ENCODE measurements at regions of chr16 and their contacts with region 1.

Region 1: GRCh38 chr16:85821441-85822135 is 22.1 kb downstream of the COX4I1 start:
- DNase-seq: peak; percentile 50 to 96 (median 76)

Region 2: GRCh38 chr16:85717393-85718121 is 104.0 kb before region 1 on chr16:
- intact Hi-C with region 1: no loop called
- DNase-seq: peak in 8 of 10 donors; percentile 49 to 91 (median 69)

Region 3: DNA sequence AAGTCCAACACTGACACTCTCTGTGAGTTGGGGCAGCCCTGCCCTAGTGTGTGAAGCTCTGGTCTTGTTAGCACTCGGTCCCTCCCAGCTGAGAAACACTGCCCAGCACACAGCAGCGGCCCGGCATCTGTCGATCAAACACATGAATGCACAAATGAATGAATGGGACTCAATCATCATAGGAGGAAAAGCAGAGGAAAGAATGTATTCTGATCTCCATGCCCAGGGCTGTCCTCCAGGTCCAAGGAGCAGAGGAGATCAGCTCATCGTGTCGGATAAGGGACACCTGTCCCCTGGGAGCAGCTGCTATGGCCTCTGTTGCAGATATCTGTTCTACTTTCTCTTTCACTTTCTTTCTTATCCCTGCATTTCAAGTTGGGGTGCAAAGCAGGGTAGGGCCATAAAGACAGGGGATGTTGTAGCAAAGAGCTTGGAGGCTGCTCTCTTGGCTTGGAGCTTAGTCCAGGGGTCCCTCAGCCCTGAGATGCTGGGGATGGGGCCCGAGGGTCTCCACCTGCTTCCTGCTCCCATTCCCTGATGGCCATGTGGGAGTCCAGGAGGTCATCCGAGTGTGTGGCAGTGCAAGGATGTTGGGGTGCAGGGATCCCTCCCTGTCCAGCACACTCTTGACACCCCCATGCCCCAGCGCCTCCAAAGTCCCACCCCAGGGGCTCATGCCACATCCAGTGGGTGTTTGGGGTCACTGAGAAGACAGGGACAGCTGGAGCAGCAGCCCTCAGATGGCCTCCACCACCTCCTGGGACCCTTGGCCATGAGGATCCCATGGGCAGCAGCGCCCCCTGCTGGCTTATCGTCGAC is 165.6 kb after region 1 on chr16:
- intact Hi-C with region 1: loop called (anchors 1 kb)
- DNase-seq: peak in 2 of 10 donors; percentile 62 to 75

Region 4: GRCh38 chr16:86016201-86016871 is 194.7 kb after region 1 on chr16:
- intact Hi-C with region 1: loop called (anchors 1 kb)
- DNase-seq: peak in 7 of 10 donors; percentile 28 to 87 (median 46)

Region 5: GRCh38 chr16:86080131-86080875 is 258.7 kb after region 1 on chr16:
- intact Hi-C with region 1: no loop called
- DNase-seq: peak in 4 of 10 donors; percentile 2 to 69 (median 27)

Region 6: DNA sequence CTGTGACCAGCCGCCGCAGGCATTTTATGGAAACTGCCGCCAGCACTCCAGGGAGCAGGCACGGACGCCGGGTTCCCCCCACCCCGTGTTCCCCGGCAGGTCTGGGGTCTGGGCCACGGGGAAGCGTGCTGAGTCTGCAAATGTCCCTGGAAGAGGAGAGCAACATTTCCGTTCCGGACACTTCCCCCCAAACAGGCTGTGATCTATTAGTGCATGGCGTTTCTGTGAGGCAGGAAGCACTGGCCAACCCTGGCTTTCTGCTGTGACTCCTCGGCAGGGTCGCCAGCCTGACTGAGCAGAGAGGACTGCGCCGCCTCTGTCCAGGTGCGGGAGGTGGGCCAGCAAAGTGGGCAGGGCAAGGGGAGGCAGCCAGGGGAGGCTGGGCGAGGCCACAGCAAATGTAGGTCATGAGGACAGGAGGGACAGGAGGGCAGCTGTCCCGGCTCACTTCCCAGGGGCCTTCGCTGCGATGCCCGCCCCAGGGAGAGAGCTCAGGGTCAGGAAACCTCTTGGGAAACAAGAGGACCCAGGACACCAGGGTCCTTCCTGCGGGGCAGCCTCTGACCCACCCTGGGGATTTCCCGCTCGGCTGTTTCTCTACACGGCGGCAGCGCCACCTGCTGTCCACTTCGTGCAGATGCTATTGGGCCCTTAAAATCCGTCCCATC is 698.2 kb after region 1 on chr16:
- intact Hi-C with region 1: loop called (anchors 5 kb)
- DNase-seq: peak in 9 of 10 donors; percentile 37 to 92 (median 59)

Region 7: GRCh38 chr16:86751076-86752030 is 929.8 kb after region 1 on chr16:
- intact Hi-C with region 1: no loop called
- DNase-seq: peak in 2 of 10 donors; percentile 37 to 47